ENCODE measurements at regions of chr2 and their contacts with region 1.

Region 1: GRCh38 chr2:232632908-232633732 is at the start of gene EFHD1:
- DNase-seq: no peak
- H3K4me3 ChIP-seq: peak within 1 kb of the TSS; percentile 59
- CTCF ChIP-seq: no peak

Region 2: GRCh38 chr2:232568161-232568560 is 65.0 kb before region 1 on chr2:
- CTCF ChIA-PET with region 1: no interaction called
- POLR2A ChIA-PET with region 1: no interaction called
- DNase-seq: peak; percentile 31
- H3K4me3 ChIP-seq: no peak overlapping the region
- CTCF ChIP-seq: no peak

Region 3: GRCh38 chr2:232600053-232600773 is 32.9 kb before region 1 on chr2:
- CTCF ChIA-PET with region 1: no interaction called
- POLR2A ChIA-PET with region 1: no interaction called
- DNase-seq: no peak
- H3K4me3 ChIP-seq: no peak overlapping the region
- CTCF ChIP-seq: no peak

Region 4: GRCh38 chr2:232668805-232669444 is 35.8 kb after region 1 on chr2:
- CTCF ChIA-PET with region 1: interaction called, 14 read pairs
- POLR2A ChIA-PET with region 1: no interaction called
- DNase-seq: no peak
- H3K4me3 ChIP-seq: no peak overlapping the region
- CTCF ChIP-seq: peak; percentile 72

Measured in AG04449 (cell line).